ENCODE measurements at regions of chrX and their contacts with region 1.

Region 1: DNA sequence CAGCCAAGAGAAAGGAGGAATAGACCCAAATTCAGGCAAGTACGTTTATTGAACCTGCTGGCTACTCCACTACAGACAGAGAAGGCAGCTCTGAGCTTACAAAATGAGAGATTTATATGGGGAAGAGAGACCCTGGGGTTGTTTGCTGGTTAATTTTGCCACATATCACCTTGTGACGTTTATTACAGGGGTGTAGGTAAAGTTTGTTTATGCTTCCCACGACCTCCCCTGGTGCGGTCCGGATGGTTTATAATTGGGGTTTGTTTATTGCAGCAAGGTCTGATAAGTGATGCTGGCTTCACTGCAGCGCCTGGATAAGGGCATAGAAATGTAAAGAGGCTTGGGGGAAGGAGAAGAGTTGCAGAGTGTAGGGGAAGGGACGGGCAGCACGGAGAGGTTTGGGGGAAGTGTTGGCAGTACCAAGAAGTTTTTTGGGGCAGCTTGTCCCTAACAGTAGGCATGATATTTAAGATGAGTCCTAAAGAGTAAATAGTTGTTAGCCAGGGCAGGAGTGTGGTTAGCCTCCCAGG is 12.6 kb downstream of the BEX1 start:
- DNase-seq: no peak
- H3K4me3 ChIP-seq: no peak overlapping the region
- H3K27ac ChIP-seq: no peak overlapping the region
- H3K4me1 ChIP-seq: no peaks in the 10 kb centered on the region
- H3K27me3 ChIP-seq: no peaks in the 10 kb centered on the region
- CTCF ChIP-seq: no peak
- EP300 ChIP-seq: no peak
- POLR2A ChIP-seq: no peak

Region 2: GRCh38 chrX:103124284-103124683 is 73.0 kb after region 1 on chrX:
- in situ Hi-C with region 1: no loop called
- intact Hi-C with region 1: no loop called
- DNase-seq: no peak
- H3K4me3 ChIP-seq: no peak overlapping the region
- H3K27ac ChIP-seq: no peak overlapping the region
- H3K4me1 ChIP-seq: no peaks in the 10 kb centered on the region
- H3K27me3 ChIP-seq: no peaks in the 10 kb centered on the region
- CTCF ChIP-seq: no peak
- EP300 ChIP-seq: no peak
- POLR2A ChIP-seq: no peak

Region 3: DNA sequence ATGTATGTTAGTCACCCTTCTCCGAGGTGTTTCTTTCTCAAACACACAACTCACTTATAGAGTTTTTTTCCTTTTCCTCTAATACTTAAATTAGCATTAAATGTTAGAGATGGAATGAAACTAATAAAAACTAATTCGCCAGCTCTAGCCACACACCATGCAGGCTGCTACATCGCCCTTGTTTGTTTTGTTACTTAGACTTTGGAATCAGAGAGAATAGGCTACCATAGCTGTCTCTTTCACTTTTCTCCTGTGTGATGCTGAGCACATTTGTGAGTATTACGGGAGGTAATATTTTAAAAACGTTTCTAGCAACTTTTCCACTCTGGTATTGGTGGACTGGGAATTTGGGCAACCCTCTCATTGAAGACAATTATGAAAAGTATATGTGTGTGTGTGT is 1159.9 kb after region 1 on chrX:
- in situ Hi-C with region 1: no loop called
- intact Hi-C with region 1: loop called (anchors 5 kb)
- DNase-seq: no peak
- H3K4me3 ChIP-seq: no peak overlapping the region
- H3K27ac ChIP-seq: no peak overlapping the region
- H3K4me1 ChIP-seq: no peaks in the 10 kb centered on the region
- H3K27me3 ChIP-seq: no peaks in the 10 kb centered on the region
- CTCF ChIP-seq: no peak
- EP300 ChIP-seq: no peak
- POLR2A ChIP-seq: no peak

Measured in transverse colon (tissue), 4 donors.